GM10248 (cell line): ENCODE measurements at regions of chr2 and their contacts with region 1.

Region 1: DNA sequence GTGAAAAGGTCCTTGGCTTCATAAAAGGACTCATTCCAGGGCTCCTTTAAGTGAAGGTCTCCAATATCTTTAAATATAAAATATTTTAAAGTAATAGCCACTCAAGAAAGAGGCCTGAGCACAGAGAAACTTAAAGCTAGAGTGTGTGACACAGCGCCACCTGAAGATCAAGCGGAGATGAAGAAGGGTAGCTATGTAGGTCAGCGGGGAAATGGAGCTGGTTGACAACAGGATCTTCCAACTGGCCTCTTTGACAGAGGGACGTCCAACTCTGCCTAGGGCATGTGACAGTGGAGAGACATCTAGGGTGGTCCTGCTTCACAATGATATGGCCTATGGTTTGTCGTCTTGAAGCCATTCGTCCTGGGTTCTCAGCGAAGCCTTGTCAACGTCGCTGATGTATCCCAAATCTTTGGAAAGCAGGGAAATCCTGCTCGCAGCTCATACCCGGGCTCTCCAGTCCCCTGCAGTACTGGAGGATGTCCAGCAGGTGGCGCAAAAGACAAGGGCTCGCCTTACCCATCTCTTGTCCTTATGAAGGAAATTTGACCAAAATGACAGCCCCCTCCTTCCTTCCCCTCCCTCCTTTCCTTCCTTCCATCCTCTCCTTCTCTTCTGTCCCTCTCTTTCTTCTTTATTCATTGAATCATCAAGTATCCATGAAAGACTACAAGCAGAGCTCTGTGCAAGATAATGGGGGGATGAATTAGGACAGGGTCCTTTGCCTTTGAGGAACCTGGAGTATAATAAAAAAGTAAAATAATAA is 59.6 kb downstream of the LONRF2 start:
- DNase-seq: peak; percentile 69
- CTCF ChIP-seq: peak; percentile 95

Region 2: DNA sequence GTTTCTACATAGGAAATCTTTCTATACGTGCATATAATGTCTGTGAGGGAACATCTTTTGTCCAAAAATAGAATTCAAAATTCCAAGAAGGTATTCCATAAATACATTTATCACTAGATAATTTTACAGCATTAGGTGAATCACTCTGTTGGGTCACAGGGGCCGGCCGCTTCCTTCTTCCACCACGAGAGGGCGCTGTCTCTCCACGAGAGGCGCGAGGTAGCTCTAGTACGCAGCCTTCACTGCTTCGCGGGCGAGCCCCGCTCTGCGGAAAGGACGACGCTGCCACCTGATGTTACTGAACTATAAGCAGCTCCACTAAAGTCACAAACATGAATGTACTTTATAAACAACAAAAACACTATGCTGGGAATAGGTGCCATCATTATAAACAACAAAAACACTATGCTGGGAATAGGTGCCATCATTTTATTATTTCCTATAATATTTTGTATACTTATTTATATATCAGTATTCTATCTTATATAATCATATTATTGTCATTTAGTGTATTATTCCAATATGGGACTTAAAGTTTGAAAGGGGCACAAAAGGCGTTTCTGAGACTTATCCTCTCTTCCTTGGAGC is 703.6 kb before region 1 on chr2:
- CTCF ChIA-PET with region 1: interaction called, 104 read pairs
- POLR2A ChIA-PET with region 1: no interaction called
- DNase-seq: peak; percentile 78
- CTCF ChIP-seq: peak; percentile 94

Region 3: GRCh38 chr2:100182494-100183361 is 80.0 kb before region 1 on chr2:
- CTCF ChIA-PET with region 1: no interaction called
- POLR2A ChIA-PET with region 1: no interaction called
- DNase-seq: no peak
- CTCF ChIP-seq: no peak

Region 4: DNA sequence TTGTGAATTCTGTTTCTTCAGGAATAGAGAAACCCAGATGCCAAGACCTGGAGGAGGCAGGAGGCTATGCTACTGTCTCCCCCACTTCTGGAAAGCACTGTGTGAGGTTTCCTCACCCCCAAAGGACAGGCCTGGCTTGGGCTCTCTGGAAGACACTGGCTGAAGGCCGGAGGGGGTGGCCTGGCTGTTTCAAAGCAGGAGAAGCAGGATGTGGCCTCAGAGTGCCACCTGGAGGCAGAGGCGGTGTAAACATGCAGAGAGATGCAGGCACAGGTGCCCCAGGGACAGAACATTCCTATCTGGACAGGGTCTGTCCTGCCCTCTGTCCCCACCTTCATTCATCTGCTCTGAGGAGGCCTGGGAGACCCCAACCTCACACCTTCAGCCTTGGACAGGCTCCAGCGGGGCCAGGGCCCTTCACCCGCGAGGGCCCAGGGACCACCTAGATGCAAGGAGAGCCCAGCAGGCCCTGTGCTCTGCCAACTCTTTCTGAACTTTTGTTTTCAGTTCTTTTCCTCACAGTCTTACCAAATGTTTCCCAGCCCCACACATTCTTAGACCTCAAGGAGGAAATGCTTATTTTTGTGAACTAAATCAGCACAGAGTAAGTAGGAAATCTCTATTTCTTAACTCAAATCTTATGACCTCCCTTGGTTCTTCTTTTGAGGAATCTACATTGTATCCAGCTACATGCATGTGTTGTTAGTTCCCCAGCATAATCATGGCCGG is 19.7 kb before region 1 on chr2:
- CTCF ChIA-PET with region 1: interaction called, 101 read pairs
- POLR2A ChIA-PET with region 1: no interaction called
- DNase-seq: peak; percentile 76
- CTCF ChIP-seq: peak; percentile 87

Region 5: DNA sequence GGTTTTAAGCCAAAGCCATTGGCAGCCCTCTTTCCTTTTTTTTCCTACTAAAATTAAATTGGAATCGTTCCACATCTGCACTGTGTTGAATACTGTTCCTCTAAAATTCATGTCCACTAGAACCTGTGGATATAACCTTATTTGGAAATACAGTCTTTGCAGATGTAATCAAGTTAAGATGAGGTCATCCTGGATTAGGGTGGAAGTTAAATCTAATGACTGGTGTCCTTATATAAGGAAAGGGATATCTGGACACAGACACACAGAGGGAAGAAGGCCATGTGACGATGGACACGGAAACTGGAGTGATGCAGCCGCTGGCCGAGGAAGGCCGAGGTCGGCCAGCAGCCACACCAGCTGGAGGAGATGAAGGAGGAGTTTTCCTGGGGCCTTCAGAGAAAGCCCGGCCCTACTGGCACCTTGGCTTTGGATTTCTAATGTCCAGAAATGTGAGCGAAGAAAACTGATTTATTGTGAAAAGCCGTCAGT is 10.1 kb after region 1 on chr2:
- CTCF ChIA-PET with region 1: interaction called, 50 read pairs
- POLR2A ChIA-PET with region 1: no interaction called
- DNase-seq: no peak
- CTCF ChIP-seq: no peak

Region 6: DNA sequence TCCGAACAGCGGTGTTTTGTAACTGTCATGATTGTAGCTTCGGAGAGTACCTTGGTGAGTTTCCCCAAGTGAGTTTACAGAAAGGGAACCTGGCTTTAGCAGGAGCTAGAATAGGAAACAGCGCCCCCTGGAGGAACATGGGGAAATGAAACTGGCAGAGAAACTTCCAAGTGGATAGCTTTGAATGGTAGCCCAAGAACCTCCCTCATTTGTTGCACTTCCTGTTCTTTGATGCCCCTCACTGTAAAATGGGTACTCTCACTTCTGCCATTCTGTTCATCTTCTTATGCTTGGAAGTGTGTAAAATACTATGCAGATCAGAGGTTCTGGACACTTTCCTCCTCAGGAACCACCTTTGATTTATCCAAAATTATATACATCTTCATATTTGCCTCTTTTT is 118.5 kb after region 1 on chr2:
- CTCF ChIA-PET with region 1: interaction called, 210 read pairs
- POLR2A ChIA-PET with region 1: no interaction called
- DNase-seq: peak; percentile 64
- CTCF ChIP-seq: peak; percentile 73

Region 7: GRCh38 chr2:100394111-100394641 is 131.4 kb after region 1 on chr2:
- CTCF ChIA-PET with region 1: interaction called, 22 read pairs
- POLR2A ChIA-PET with region 1: no interaction called
- DNase-seq: peak; percentile 77
- CTCF ChIP-seq: no peak

Region 8: GRCh38 chr2:101032084-101032776 is 769.5 kb after region 1 on chr2:
- CTCF ChIA-PET with region 1: no interaction called
- POLR2A ChIA-PET with region 1: no interaction called
- DNase-seq: no peak
- CTCF ChIP-seq: no peak